HEK293 (cell line): ENCODE measurements at regions of chr17 and their contacts with region 1.

Region 1: GRCh38 chr17:7045909-7046724 is 2.2 kb upstream of the SLC16A11 start:
- H3K4me3 ChIP-seq: peak overlapping the region; percentile 0
- H3K27ac ChIP-seq: peak overlapping the region; percentile 34; the same call in 1 of the 2 replicates
- H3K4me1 ChIP-seq: peaks cover 6% of the 10 kb centered on the region; the same call in 1 of the 2 replicates
- CTCF ChIP-seq: peak; percentile 76

Region 2: GRCh38 chr17:6996256-6997011 is 49.7 kb before region 1 on chr17:
- CTCF ChIA-PET with region 1: no interaction called
- POLR2A ChIA-PET with region 1: no interaction called
- H3K4me3 ChIP-seq: no peak overlapping the region
- H3K27ac ChIP-seq: no peak overlapping the region
- H3K4me1 ChIP-seq: no peaks in the 10 kb centered on the region
- CTCF ChIP-seq: no peak

Region 3: DNA sequence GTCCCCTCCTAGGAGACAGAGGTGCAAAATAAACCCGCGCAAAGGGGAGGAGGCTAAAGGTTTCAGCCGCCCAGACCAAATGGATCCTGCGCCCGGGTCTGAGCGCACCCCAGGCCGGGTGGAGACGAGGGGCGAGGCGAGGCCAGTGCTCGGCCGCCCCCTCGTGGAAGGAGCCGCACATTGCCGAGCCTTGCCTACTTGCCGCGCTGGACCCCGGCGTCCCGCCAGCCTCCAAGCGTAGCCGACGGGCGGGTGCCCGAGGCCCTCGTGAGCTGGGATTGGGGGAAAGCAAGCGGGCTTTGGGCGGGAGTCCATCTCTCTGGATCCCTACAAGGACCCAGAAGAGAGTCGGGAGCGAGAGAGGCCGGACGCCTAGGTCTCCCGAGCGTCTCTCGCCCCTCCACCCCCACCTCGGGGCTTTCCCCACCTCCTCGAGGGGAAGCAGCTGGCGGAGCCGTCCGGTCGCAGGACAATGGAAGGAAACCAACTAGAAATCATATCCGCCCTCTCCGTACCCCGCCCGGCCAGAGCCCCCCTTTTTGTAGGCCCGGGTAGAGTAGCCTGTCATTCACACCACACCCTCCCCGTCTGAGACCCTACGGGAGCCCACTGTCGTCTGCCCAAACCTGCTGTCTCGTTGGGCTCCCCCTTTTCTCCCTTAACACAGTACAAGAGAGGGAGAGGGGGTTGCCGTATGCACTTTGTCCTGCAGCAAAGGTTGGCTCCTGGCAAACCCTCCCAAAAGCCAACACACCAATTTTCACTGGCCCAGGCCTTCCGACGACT is 23.9 kb before region 1 on chr17:
- CTCF ChIA-PET with region 1: interaction called, 13 read pairs
- POLR2A ChIA-PET with region 1: no interaction called
- H3K4me3 ChIP-seq: no peak overlapping the region
- H3K27ac ChIP-seq: no peak overlapping the region
- H3K4me1 ChIP-seq: peaks cover 3% of the 10 kb centered on the region; the same call in 1 of the 2 replicates
- CTCF ChIP-seq: peak; percentile 90

Region 4: DNA sequence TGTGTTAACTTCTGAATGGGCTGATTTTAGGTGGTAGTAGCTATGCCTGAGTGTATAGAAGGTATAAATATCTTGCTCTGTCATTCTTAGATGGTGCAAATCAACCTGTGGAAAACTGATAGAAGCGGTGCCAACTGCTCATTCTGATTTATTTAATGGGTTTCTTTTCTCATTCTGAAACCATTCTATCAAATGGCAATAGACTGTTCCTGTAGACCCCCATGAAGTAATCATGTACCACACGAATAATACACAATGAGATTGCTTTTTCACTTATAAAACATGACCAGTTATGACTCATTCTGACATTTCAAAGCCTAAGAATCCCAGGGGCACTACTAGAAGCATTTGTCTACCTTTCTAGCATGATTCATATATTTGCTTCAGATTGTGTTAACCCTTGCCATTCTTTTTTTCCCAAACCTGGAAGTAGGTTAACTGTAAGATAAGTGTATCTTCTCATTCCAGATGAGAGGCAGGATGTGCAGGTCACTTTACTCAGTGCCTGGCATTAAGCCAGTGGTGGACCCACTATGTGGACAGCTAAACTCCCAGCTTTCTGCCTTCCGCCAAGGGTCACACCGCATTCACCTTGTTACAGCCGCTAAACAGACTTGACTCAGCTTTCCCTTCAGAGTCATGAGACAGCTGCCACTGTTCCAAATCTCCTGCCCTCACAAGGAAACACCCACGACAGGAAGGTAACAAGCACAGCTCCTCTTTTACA is 14.2 kb after region 1 on chr17:
- CTCF ChIA-PET with region 1: interaction called, 15 read pairs
- POLR2A ChIA-PET with region 1: no interaction called
- H3K4me3 ChIP-seq: no peak overlapping the region
- H3K27ac ChIP-seq: no peak overlapping the region
- H3K4me1 ChIP-seq: 0 out of 2 replicates have a peak, but pooled peaks cover 5% of the 10 kb centered on the region
- CTCF ChIP-seq: no peak

Region 5: GRCh38 chr17:7147772-7148171 is 101.7 kb after region 1 on chr17:
- CTCF ChIA-PET with region 1: interaction called, 388 read pairs
- POLR2A ChIA-PET with region 1: interaction called, 3 read pairs
- H3K4me3 ChIP-seq: no peak overlapping the region
- H3K27ac ChIP-seq: no peak overlapping the region
- H3K4me1 ChIP-seq: no peaks in the 10 kb centered on the region; the same call in 1 of the 2 replicates
- CTCF ChIP-seq: no peak

Region 6: GRCh38 chr17:7219812-7220581 is 173.9 kb after region 1 on chr17 and contains the starts of genes ACADVL and DLG4:
- CTCF ChIA-PET with region 1: interaction called, 20 read pairs
- POLR2A ChIA-PET with region 1: interaction called, 9 read pairs
- H3K4me3 ChIP-seq: peak within 1 kb of the TSS; percentile 83
- H3K27ac ChIP-seq: peak within 1 kb of the TSS; percentile 83; the same call in 1 of the 2 replicates
- H3K4me1 ChIP-seq: peaks cover 7% of the 10 kb centered on the region
- CTCF ChIP-seq: no peak